Right ventricle myocardium inferior (tissue), 1 donor: ENCODE measurements at regions of chr15 and their contacts with region 1.

Region 1: DNA sequence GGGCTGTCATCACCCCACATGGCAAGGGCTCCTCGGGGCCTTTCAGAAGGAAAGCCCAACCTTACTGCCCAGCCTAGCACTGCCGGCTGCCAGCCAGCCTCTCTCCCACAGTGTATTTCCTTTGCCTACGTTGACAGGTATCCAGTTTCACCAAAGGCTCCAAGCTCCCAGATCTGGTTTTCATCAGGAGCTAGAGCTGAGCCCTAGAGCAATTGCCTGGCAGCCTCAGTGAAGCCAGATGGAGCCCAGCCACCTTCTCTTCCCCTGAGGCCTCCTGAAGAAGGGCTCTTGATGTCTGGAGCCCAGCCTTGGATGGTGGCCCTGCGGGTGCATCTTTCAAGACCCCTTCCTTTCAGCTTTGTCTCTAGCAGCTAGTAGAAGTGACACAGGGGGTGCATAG is 20.3 kb downstream of the CRABP1 start:
- DNase-seq: no peak
- ATAC-seq: peak; percentile 92

Region 2: DNA sequence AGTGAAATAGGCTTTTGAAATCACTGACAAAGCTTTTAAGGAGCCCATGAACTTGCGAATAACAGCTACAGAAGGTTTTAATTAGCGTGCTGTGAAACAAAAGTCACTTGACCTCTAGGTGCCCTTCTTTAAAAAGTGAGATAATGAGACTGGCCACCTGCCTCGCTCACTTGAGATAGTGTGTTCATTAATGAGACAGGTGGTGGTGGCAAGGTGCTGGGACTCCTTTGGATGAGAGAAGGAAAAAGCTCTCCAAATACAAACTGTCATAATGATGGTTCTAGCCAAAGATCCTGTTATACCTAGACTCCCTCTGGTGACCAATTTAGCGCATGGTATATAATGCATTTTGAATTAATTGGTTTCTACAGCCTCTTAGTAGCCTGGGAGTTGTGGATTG is 54.9 kb after region 1 on chr15:
- intact Hi-C with region 1: loop called (anchors 10 kb)
- DNase-seq: no peak
- ATAC-seq: no peak